Dorsolateral prefrontal cortex (tissue), 120 donors: ENCODE measurements at regions of chr5 and their contacts with region 1.

Region 1: GRCh38 chr5:114265432-114266060 is 96.3 kb upstream of the KCNN2 start:
- DNase-seq: no peak
- H3K4me3 ChIP-seq: no peak overlapping the region
- H3K27ac ChIP-seq: no peak overlapping the region
- H3K27me3 ChIP-seq: peaks cover 0 to 2% (median 0%) of the 10 kb centered on the region in 45 donors
- CTCF ChIP-seq: no peak

Region 2: DNA sequence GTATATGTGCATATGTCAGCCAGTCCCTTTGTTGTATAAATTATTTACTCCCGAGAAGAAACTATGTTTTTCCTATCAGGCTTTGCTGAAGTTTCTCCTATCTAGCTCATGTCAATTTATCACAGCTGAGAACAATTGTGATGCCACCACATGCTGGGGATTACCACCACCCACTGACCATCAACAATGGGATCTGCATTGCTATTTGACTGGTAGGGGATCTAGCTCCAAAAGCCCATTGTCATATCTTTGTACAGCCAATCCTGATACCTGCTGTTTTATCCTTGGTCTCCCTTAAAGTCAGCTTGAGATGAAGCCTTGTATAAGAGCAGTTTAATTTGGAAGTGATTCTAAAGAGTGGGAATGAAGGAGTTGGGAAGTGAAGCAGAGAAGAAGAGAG is 42.5 kb after region 1 on chr5:
- intact Hi-C with region 1: loop called in 1 of 2 experiments (anchors 2 kb)
- DNase-seq: no peak
- H3K4me3 ChIP-seq: no peak overlapping the region
- H3K27ac ChIP-seq: no peak overlapping the region
- H3K27me3 ChIP-seq: no peaks in the 10 kb centered on the region
- CTCF ChIP-seq: no peak

Region 3: GRCh38 chr5:114500756-114501155 is 235.2 kb after region 1 on chr5:
- intact Hi-C with region 1: no loop called
- DNase-seq: no peak
- H3K4me3 ChIP-seq: no peak overlapping the region
- H3K27ac ChIP-seq: no peak overlapping the region
- H3K27me3 ChIP-seq: no peaks in the 10 kb centered on the region
- CTCF ChIP-seq: no peak